ENCODE measurements at regions of chr1 and their contacts with region 1.

Region 1: GRCh38 chr1:230149751-230150584 is 82.9 kb downstream of the GALNT2 start:
- DNase-seq: peak in 3 of 4 experiments; percentile 43 to 71 (median 56)
- ATAC-seq: peak; percentile 57
- H3K4me3 ChIP-seq: peak overlapping the region; percentile 2; the same call in 1 of the 2 replicates
- H3K27ac ChIP-seq: peak overlapping the region; percentile 71
- H3K4me1 ChIP-seq: peaks cover 77 to 88% of the 10 kb centered on the region in 2 experiments
- H3K27me3 ChIP-seq: no peaks in the 10 kb centered on the region
- CTCF ChIP-seq: peak; percentile 21 to 45 (median 28); a peak in 3 of 6 replicates
- EP300 ChIP-seq: no peak
- POLR2A ChIP-seq: no peak
- RAD21 ChIP-seq: peak in 1 of 2 experiments; percentile 38; a peak in 1 of 4 replicates

Region 2: GRCh38 chr1:229558571-229559335 is 591.2 kb before region 1 on chr1 and contains the start of gene ABCB10:
- CTCF ChIA-PET with region 1: no interaction called
- POLR2A ChIA-PET with region 1: no interaction called
- in situ Hi-C with region 1: no loop called
- intact Hi-C with region 1: loop called (anchors 10 kb)
- DNase-seq: peak; percentile 97 to 100 (median 98)
- ATAC-seq: peak; percentile 84
- H3K4me3 ChIP-seq: peak within 1 kb of the TSS; percentile 79
- H3K27ac ChIP-seq: peak within 1 kb of the TSS; percentile 77
- H3K4me1 ChIP-seq: peaks cover 27 to 41% of the 10 kb centered on the region in 2 experiments; a peak in 4 of 5 replicates
- H3K27me3 ChIP-seq: no peaks in the 10 kb centered on the region; a peak in 1 of 5 replicates
- CTCF ChIP-seq: peak; percentile 97 to 98 (median 98)
- EP300 ChIP-seq: 0 out of 2 replicates have a peak, but pooled peaks have one; percentile 3
- POLR2A ChIP-seq: peak; percentile 84
- RAD21 ChIP-seq: peak; percentile 55 to 56
- polyA plus RNA-seq, gene ABCB10: 12.4 to 16.5 TPM

Region 3: GRCh38 chr1:230105754-230106625 is 44.0 kb before region 1 on chr1:
- CTCF ChIA-PET with region 1: no interaction called
- POLR2A ChIA-PET with region 1: interaction called, 3 read pairs
- in situ Hi-C with region 1: no loop called
- intact Hi-C with region 1: loop called (anchors 2 kb)
- DNase-seq: no peak
- ATAC-seq: no peak
- H3K4me3 ChIP-seq: no peak overlapping the region
- H3K27ac ChIP-seq: no peak overlapping the region
- H3K4me1 ChIP-seq: peaks cover 23 to 24% of the 10 kb centered on the region in 2 experiments; a peak in 4 of 5 replicates
- H3K27me3 ChIP-seq: no peaks in the 10 kb centered on the region
- CTCF ChIP-seq: no peak
- EP300 ChIP-seq: no peak
- POLR2A ChIP-seq: no peak
- RAD21 ChIP-seq: no peak

Region 4: GRCh38 chr1:230127105-230128054 is 22.6 kb before region 1 on chr1:
- CTCF ChIA-PET with region 1: no interaction called
- POLR2A ChIA-PET with region 1: interaction called, 20 read pairs
- in situ Hi-C with region 1: no loop called
- intact Hi-C with region 1: loop called (anchors 2 kb)
- DNase-seq: peak; percentile 82 to 99 (median 90)
- ATAC-seq: peak; percentile 94
- H3K4me3 ChIP-seq: no peak overlapping the region
- H3K27ac ChIP-seq: peak overlapping the region; percentile 76
- H3K4me1 ChIP-seq: peaks cover 64 to 74% of the 10 kb centered on the region in 2 experiments
- H3K27me3 ChIP-seq: no peaks in the 10 kb centered on the region
- CTCF ChIP-seq: peak in 1 of 3 experiments; percentile 26; a peak in 2 of 6 replicates
- EP300 ChIP-seq: peak; percentile 98
- POLR2A ChIP-seq: no peak
- RAD21 ChIP-seq: no peak; a peak in 2 of 4 replicates

Region 5: DNA sequence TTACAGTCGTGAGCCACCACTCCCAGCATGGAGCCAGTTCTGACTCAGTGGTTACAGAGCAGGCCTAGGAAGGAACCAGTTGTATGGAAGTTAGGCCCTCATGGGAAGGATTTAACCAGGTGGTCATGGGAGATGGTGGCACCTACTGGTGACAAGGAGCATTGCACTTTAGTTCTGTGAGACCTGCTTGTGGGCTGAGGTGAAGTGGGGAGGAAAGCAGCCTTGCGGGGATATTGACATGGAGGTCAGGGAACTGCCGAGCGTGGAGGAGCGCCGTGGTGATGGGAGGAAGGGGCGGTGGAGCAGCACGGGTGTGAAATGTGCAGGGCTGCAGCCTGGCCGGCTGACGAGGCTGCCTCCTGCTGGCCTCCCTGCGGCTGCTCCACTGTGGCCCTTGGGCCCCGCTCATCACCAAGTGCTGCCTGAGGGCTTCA is 17.5 kb after region 1 on chr1:
- CTCF ChIA-PET with region 1: no interaction called
- POLR2A ChIA-PET with region 1: interaction called, 6 read pairs
- in situ Hi-C with region 1: no loop called
- intact Hi-C with region 1: loop called (anchors 2 kb)
- DNase-seq: peak; percentile 80 to 86 (median 84)
- ATAC-seq: peak; percentile 89
- H3K4me3 ChIP-seq: no peak overlapping the region
- H3K27ac ChIP-seq: no peak overlapping the region
- H3K4me1 ChIP-seq: peaks cover 13 to 34% of the 10 kb centered on the region in 2 experiments
- H3K27me3 ChIP-seq: no peaks in the 10 kb centered on the region
- CTCF ChIP-seq: peak; percentile 82 to 97 (median 88)
- EP300 ChIP-seq: peak; percentile 11; the same call in 1 of the 2 replicates
- POLR2A ChIP-seq: no peak
- RAD21 ChIP-seq: peak; percentile 73 to 96

Measured in K562 (cell line).